ENCODE measurements at regions of chr17 and their contacts with region 1.

Region 1: GRCh38 chr17:20315821-20316220 is 151.5 kb downstream of the LGALS9B start:
- DNase-seq: no peak
- CTCF ChIP-seq: no peak

Region 2: GRCh38 chr17:20121359-20122253 is 194.2 kb before region 1 on chr17:
- CTCF ChIA-PET with region 1: interaction called, 40 read pairs
- POLR2A ChIA-PET with region 1: no interaction called
- DNase-seq: peak; percentile 76
- CTCF ChIP-seq: peak; percentile 79

Region 3: DNA sequence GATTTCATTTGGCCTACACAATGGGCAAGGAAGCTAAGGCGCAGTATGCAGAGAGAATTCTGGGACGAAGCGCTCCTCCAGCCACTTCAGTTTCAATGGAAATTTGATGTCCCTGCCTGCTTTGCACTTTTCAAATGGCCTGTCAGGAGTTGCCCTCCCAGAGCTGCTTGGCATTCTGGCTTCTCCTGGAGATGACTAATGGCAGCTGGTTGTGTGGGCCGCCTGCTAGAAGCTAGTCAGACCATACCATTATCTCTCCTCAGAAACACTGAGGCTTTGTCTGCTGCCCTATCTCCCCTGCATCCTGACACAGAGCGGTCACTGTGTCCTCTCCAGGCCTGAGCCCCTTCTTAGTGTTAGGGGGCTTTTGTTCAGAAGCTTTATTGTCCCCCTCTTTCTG is 126.5 kb before region 1 on chr17:
- CTCF ChIA-PET with region 1: no interaction called
- POLR2A ChIA-PET with region 1: no interaction called
- DNase-seq: no peak
- CTCF ChIP-seq: no peak

Region 4: DNA sequence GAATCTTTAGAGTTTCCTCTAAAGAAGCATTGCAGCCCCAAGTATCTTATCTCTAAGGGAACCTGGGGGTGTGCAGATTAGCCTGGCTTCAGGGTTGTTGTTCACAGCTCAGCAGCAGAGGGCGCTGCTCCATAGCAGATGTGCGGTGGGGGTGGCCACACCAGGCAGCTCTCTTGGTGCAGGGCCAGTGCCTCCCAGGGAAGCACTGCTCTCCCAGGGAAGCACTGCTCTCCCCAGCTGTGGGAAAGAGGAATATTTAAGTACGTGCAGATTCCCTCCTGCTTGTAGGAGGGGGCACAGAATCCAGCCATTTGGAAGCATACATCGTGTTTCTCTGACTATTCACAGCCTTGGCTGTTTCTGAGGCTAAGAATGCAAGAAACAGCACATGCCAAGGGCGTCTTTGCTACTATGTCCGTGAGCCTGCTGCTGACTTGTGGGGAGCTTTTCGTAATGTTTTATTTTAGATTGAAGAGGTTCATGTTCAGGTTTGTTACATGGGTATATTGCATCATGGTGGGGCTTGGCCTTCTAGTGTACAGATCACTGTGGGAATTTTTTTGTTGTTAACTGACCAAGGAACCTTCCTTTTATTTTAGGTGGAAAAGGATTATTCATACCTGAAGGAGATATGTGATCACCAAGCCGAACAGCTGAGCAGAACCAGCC is 88.9 kb before region 1 on chr17:
- CTCF ChIA-PET with region 1: interaction called, 22 read pairs
- POLR2A ChIA-PET with region 1: no interaction called
- DNase-seq: peak; percentile 68
- CTCF ChIP-seq: peak; percentile 81

Measured in GM10248 (cell line).